ENCODE measurements at regions of chr6 and their contacts with region 1.

Region 1: GRCh38 chr6:107061125-107062020 is 33.4 kb downstream of the MTRES1 start:
- DNase-seq: peak; percentile 41
- H3K4me3 Mint-ChIP-seq: peak overlapping the region; percentile 36
- H3K27ac Mint-ChIP-seq: peak overlapping the region; percentile 77
- H3K4me1 Mint-ChIP-seq: peaks cover 55% of the 10 kb centered on the region
- H3K27me3 Mint-ChIP-seq: no peaks in the 10 kb centered on the region

Region 2: GRCh38 chr6:106988664-106989063 is 72.7 kb before region 1 on chr6:
- CTCF ChIA-PET with region 1: no interaction called
- POLR2A ChIA-PET with region 1: no interaction called
- DNase-seq: no peak
- H3K4me3 Mint-ChIP-seq: no peak overlapping the region
- H3K27ac Mint-ChIP-seq: no peak overlapping the region
- H3K4me1 Mint-ChIP-seq: no peaks in the 10 kb centered on the region
- H3K27me3 Mint-ChIP-seq: peaks cover 15% of the 10 kb centered on the region

Region 3: GRCh38 chr6:107026965-107027364 is 34.4 kb before region 1 on chr6:
- CTCF ChIA-PET with region 1: interaction called, 11 read pairs
- POLR2A ChIA-PET with region 1: interaction called, 15 read pairs
- DNase-seq: no peak
- H3K4me3 Mint-ChIP-seq: peak overlapping the region; percentile 30
- H3K27ac Mint-ChIP-seq: peak overlapping the region; percentile 60
- H3K4me1 Mint-ChIP-seq: peaks cover 30% of the 10 kb centered on the region
- H3K27me3 Mint-ChIP-seq: no peaks in the 10 kb centered on the region

Region 4: GRCh38 chr6:107033126-107033525 is 28.2 kb before region 1 on chr6:
- CTCF ChIA-PET with region 1: interaction called, 11 read pairs
- POLR2A ChIA-PET with region 1: interaction called, 15 read pairs
- DNase-seq: no peak
- H3K4me3 Mint-ChIP-seq: no peak overlapping the region
- H3K27ac Mint-ChIP-seq: no peak overlapping the region
- H3K4me1 Mint-ChIP-seq: peaks cover 34% of the 10 kb centered on the region
- H3K27me3 Mint-ChIP-seq: no peaks in the 10 kb centered on the region

Measured in activated CD4-positive, alpha-beta memory T cell treated with anti-CD3 and anti-CD28 coated beads, Interleukin-2, amount 10 ng/mL, durations not matched to agents 7 days and 5 days (primary cell).